ENCODE measurements at regions of chr6 and their contacts with region 1.

Region 1: DNA sequence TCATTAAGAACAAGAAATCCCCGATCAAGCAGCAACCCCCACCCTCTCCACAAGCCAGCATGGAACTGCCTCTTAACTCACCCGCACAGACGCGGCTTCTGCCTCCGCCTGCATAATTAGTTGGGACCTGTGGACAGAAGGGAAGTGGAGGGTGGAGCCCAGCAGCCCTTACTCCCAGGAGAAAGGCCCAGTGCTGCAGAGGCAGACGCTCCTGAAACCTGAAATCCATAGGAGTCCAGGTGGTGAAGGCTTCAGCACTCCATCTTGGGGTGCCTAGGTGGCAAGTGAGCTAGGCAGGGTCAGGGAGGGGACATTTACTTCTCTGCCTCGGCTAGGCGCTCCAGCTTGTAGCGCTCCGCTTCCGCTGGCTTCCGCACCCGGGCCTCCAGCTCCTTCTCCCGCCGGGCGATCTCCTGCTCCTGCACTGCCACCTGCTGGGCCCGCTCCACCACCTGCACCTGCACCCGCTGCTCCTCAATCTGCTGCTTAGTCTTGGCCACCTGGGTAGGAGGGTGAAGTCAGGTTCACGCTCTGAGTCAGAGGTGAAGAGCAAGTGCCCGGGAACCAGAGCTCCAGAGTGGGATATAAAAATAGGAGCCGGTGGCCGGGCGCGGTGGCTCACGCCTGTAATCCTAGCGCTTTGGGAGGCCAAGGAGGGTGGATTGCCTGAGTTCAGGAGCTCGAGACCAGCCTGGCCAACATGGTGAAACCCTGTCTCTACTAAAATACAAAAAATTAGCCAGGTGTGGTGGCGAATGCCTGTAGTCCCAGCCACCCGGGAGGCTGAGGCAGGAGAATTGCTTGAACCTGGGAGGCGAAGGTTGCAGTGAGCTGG is 10.7 kb downstream of the TUBB start:
- DNase-seq: peak; percentile 90
- H3K4me3 Mint-ChIP-seq: peak overlapping the region; percentile 35
- H3K27ac Mint-ChIP-seq: peak overlapping the region; percentile 55
- H3K4me1 Mint-ChIP-seq: peaks cover 44% of the 10 kb centered on the region
- H3K27me3 Mint-ChIP-seq: no peaks in the 10 kb centered on the region

Region 2: GRCh38 chr6:30571075-30571768 is 159.6 kb before region 1 on chr6 and contains the start of gene ABCF1:
- CTCF ChIA-PET with region 1: interaction called, 10 read pairs
- POLR2A ChIA-PET with region 1: no interaction called
- DNase-seq: peak; percentile 99
- H3K4me3 Mint-ChIP-seq: peak within 1 kb of the TSS; percentile 97
- H3K27ac Mint-ChIP-seq: peak within 1 kb of the TSS; percentile 97
- H3K4me1 Mint-ChIP-seq: peaks cover 63% of the 10 kb centered on the region
- H3K27me3 Mint-ChIP-seq: no peaks in the 10 kb centered on the region
- total RNA-seq, gene ABCF1: 64.3 to 65.2 TPM

Region 3: DNA sequence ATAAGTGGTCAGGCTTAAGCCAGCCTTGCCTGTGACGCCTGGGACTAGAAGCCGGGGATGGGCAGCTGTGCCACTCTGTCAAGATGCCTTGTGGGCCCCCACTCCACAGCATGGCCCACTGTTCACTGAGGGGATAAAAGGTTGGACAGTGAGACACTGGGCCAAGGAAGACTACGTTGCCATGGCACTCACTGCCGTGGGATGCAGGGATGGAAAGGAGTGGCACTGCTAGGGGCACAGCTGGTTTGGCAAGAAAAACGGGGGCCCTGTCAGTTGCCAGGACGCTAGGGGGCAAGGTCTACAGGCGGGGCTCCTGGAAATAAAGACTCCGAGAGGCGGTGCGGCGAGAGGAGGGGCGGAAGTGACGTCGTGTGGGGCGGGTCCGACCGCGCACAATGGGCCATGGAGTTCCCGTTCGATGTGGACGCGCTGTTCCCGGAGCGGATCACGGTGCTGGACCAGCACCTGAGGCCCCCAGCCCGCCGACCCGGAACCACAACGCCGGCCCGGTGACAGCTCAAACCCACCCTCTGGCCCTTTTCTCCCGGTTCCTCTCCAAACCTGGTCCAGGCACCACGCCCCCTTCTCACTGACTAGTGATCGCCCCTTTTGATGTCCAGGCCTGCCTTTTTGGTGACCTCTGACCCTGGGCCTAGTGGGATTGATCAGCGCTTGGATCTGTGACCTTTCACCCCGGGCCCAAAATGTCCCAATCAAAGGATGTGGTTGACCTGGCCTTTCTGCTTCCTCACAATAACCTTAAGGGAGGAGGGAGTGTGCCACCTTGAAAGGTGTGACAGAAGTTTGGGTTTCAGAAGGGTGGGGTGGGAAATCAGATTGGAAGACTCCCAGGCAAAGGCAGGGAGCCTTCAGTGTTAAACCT is 104.1 kb before region 1 on chr6 and contains the start of gene ATAT1:
- CTCF ChIA-PET with region 1: interaction called, 14 read pairs
- POLR2A ChIA-PET with region 1: interaction called, 3 read pairs
- DNase-seq: peak; percentile 88
- H3K4me3 Mint-ChIP-seq: peak within 1 kb of the TSS; percentile 92
- H3K27ac Mint-ChIP-seq: peak within 1 kb of the TSS; percentile 96
- H3K4me1 Mint-ChIP-seq: peaks cover 27% of the 10 kb centered on the region
- H3K27me3 Mint-ChIP-seq: no peaks in the 10 kb centered on the region
- total RNA-seq, gene ATAT1: 6.3 to 8.0 TPM

Region 4: GRCh38 chr6:30672445-30673253 is 58.2 kb before region 1 on chr6 and contains the start of gene DHX16:
- CTCF ChIA-PET with region 1: interaction called, 626 read pairs
- POLR2A ChIA-PET with region 1: interaction called, 10 read pairs
- DNase-seq: peak; percentile 92
- H3K4me3 Mint-ChIP-seq: peak within 1 kb of the TSS; percentile 89
- H3K27ac Mint-ChIP-seq: peak within 1 kb of the TSS; percentile 18
- H3K4me1 Mint-ChIP-seq: peaks cover 42% of the 10 kb centered on the region
- H3K27me3 Mint-ChIP-seq: no peaks in the 10 kb centered on the region
- total RNA-seq, gene DHX16: 35.6 to 37.6 TPM

Region 5: DNA sequence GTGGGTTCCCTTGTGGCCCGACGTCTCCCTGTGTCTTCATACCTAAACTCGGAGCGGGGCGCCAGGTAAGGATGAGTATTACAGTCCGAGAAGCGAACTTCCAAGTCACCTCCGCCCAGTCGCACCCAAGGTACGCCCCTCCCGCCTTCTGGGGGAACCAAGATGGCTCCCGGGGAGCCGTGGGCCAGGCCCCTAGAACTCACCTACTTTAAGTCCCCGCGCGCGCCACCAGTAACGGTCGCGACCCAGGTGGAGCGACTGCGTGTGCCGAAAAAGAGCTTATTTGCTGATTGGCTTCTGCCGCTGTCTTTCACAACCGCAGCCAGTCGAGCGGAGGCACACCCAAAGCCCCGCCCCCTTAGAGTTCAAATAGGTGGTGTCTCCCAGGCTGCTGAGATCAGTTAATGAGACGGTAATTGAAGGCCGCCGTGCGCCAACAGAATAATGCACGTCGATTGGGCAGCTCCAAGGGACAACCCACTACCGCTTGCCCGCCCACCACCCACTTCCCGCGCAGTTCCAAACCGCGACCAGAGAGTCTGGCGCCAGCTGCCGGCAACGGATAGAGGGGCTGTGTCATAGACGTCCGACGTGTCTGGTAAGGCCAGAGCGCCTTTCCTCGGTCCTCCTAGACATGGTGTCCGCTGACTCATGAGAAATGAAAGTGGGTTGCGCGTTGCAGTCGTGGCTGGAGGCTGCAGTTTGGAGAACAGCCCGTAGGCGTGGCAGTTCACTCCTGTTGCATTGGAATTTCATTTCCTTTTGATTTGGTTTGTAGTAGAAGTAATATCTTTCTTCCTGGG is 13.6 kb before region 1 on chr6 and contains the start of gene MDC1:
- CTCF ChIA-PET with region 1: interaction called, 25 read pairs
- POLR2A ChIA-PET with region 1: interaction called, 32 read pairs
- DNase-seq: peak; percentile 100
- H3K4me3 Mint-ChIP-seq: peak within 1 kb of the TSS; percentile 84
- H3K27ac Mint-ChIP-seq: peak within 1 kb of the TSS; percentile 99
- H3K4me1 Mint-ChIP-seq: peaks cover 62% of the 10 kb centered on the region
- H3K27me3 Mint-ChIP-seq: no peaks in the 10 kb centered on the region
- total RNA-seq, gene MDC1: 49.7 to 54.6 TPM

Region 6: DNA sequence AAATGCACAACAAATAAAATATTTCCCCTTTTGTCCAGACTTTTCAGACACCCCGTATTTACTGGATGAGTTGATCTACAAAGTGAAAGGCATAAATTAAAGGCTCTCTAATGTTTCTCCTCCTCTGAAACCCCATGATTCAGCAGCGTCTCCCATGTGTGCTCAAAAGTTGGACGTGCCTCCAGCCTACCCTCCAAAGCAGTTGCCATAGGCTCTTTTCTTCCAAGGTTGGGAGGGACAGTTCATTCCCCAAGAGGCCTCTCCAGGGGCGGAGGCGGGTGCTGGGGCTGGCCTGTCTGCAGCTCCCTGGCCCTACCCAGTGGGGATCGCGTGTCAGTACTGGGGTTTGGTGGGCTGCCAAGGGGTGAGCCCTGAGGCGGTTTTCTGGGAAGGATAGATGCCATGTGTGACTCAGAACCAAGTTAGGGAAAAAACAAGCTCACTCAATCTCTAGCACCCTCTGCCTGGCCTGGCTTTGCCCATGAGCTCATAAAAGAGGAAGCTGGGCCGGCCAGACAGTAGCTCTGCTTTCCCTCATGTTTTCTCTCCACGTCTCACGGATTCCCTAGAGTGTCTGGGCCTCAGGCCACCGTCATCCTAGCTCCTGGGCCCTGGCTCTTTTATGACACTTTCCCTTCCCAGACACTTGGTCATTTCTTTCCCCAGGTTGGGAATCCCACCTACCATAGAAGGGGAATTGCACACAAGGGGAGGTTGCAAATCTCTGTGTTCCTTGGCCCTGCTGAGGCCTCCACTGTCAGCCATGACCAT is 21.5 kb after region 1 on chr6:
- CTCF ChIA-PET with region 1: no interaction called
- POLR2A ChIA-PET with region 1: no interaction called
- DNase-seq: no peak
- H3K4me3 Mint-ChIP-seq: no peak overlapping the region
- H3K27ac Mint-ChIP-seq: no peak overlapping the region
- H3K4me1 Mint-ChIP-seq: peaks cover 3% of the 10 kb centered on the region
- H3K27me3 Mint-ChIP-seq: peaks cover 3% of the 10 kb centered on the region

Region 7: DNA sequence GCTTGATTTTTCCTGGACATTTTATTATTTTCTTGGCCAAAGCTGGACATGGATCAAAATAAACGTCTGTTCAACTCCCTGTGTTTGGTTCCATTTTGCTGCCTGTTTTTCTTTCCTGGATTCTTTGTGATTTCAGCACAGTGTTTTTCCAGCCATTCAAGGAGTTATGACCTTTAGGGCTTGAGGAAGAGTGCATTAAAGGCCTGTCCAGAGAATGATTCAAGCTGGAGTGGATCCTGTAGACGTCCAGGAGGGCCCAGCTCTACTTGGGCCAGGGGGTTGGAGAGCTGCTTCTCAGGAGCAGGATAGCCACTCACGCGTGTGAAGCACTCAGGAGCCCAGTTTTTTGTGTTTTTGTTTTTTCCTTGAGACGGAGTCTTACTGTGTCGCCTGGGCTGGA is 70.1 kb after region 1 on chr6:
- CTCF ChIA-PET with region 1: no interaction called
- POLR2A ChIA-PET with region 1: no interaction called
- DNase-seq: no peak
- H3K4me3 Mint-ChIP-seq: no peak overlapping the region
- H3K27ac Mint-ChIP-seq: no peak overlapping the region
- H3K4me1 Mint-ChIP-seq: peaks cover 12% of the 10 kb centered on the region
- H3K27me3 Mint-ChIP-seq: peaks cover 3% of the 10 kb centered on the region

Region 8: DNA sequence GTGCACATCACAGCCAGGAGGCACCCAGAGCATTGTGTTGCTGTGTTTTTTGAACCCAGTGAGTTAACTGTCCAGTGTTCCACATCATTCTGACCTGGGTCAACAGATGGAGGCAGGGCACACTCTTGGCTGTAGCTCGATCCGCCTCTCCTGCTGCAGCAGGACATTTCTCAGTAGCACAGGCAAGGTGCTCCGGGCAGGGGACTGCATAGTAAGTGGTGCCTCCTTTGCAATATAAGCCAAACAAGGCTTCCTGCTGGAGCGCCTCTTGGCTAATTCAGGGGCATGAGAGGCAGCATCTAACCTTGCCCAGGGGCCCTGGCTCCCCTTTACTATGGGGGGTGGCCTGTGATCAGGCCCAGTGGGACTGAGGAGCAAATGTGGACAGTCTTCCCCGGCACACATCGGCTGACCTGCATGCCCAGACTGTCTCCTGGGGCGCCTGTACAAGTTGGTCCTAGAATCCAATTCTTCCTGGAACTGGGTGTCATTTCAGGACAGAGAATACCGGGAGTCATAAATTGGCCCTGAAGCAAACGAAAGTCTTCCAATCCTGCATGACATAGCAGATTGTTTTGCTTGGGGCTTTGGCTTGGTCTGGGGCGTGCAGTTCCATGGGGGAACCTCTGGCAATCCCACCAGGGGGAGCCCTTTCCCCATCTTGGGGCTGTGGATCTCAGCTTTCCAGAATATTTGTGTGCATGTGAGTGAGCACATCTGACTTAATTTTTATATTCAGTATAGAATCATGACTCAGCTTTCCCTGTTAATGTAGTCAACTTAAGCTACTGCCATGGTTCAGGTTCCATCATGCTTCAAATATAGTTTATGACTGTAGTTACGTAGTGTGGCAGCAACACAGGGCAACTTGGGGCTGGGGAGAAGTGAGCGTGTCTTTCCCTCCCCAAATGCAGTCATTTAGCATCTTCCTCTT is 97.5 kb after region 1 on chr6:
- CTCF ChIA-PET with region 1: interaction called, 15 read pairs
- POLR2A ChIA-PET with region 1: interaction called, 3 read pairs
- DNase-seq: peak; percentile 79
- H3K4me3 Mint-ChIP-seq: peak overlapping the region; percentile 86
- H3K27ac Mint-ChIP-seq: peak overlapping the region; percentile 66
- H3K4me1 Mint-ChIP-seq: peaks cover 57% of the 10 kb centered on the region
- H3K27me3 Mint-ChIP-seq: no peaks in the 10 kb centered on the region

Region 9: DNA sequence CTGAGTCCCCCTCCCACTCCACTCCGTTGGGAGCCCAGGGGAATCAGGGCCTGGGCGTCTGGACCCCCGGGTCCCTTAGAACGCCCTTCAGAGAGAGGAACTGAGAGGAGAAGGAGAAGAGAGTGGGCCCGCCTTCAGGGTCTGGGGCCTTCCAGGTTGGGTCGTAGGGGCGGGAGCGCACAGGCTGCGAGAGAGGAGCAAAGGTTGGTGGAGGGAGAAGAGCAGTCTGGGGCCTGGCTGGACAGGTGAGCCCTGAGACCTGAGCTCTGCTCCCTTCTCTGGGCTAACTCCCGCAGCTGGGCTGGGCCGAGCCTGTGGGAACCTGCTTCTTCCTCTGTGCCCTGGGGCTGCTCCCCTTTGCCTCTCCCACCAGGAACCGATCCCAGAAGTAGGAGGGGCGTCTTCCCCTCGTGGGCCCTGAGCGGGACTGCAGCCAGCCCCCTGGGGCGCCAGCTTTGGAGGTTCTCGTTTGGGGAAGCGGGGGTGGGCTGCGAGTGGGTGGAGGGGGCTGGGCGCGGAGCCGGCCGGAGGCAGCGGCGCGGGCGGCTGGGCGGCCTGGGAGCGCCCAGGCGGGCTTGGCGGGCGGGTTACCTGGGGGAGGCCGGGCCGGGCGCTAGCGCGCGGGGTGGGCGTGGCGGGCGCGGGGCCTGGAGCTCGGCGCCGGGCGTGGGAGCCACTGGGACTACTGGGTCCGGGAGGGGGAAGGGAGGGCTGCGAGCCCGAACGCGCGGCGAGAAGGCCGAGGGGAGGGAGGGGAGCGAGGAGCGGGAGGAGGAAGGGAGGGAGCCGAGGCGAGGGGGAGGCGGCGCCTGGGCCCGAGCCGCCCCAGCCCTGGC is 153.1 kb after region 1 on chr6 and contains the start of gene DDR1:
- CTCF ChIA-PET with region 1: no interaction called
- POLR2A ChIA-PET with region 1: no interaction called
- DNase-seq: peak; percentile 44
- H3K4me3 Mint-ChIP-seq: peak within 1 kb of the TSS; percentile 66
- H3K27ac Mint-ChIP-seq: no peak within 1 kb of the TSS
- H3K4me1 Mint-ChIP-seq: peaks cover 14% of the 10 kb centered on the region
- H3K27me3 Mint-ChIP-seq: peaks cover 35% of the 10 kb centered on the region
- total RNA-seq, gene DDR1: 1.8 to 3.2 TPM

Measured in activated CD4-positive, alpha-beta memory T cell treated with anti-CD3 and anti-CD28 coated beads, Interleukin-2, amount 10 ng/mL, durations not matched to agents 7 days and 5 days (primary cell).